Activated T-helper 1 cell treated with anti-CD3 and anti-CD28 coated beads, Interleukin-12 subunit alpha, Interleukin-12 subunit beta, Interleukin-2, Interleukin-4 antibody, amounts not matched to agents 30 ng/mL and 10 ng/mL and 1 ng/mL, durations not matched to agents 14 hours and 24 hours and 36 hours (primary cell): ENCODE measurements at regions of chr3 and their contacts with region 1.

Region 1: GRCh38 chr3:60017631-60018030 is 967.8 kb upstream of the CFAP20DC start:
- DNase-seq: peak; percentile 66
- H3K4me3 Mint-ChIP-seq: peak overlapping the region; percentile 74
- H3K27ac Mint-ChIP-seq: peak overlapping the region; percentile 96
- H3K4me1 Mint-ChIP-seq: peaks cover 67% of the 10 kb centered on the region
- H3K27me3 Mint-ChIP-seq: peaks cover 2% of the 10 kb centered on the region

Region 2: GRCh38 chr3:59235634-59236012 is 782.0 kb before region 1 on chr3:
- intact Hi-C with region 1: loop called (anchors 2 kb)
- DNase-seq: peak; percentile 37
- H3K4me3 Mint-ChIP-seq: peak overlapping the region; percentile 58
- H3K27ac Mint-ChIP-seq: peak overlapping the region; percentile 27
- H3K4me1 Mint-ChIP-seq: peaks cover 29% of the 10 kb centered on the region
- H3K27me3 Mint-ChIP-seq: peaks cover 6% of the 10 kb centered on the region

Region 3: GRCh38 chr3:59866076-59866475 is 151.6 kb before region 1 on chr3:
- intact Hi-C with region 1: loop called (anchors 1 kb)
- DNase-seq: no peak
- H3K4me3 Mint-ChIP-seq: no peak overlapping the region
- H3K27ac Mint-ChIP-seq: no peak overlapping the region
- H3K4me1 Mint-ChIP-seq: peaks cover 40% of the 10 kb centered on the region
- H3K27me3 Mint-ChIP-seq: no peaks in the 10 kb centered on the region

Region 4: DNA sequence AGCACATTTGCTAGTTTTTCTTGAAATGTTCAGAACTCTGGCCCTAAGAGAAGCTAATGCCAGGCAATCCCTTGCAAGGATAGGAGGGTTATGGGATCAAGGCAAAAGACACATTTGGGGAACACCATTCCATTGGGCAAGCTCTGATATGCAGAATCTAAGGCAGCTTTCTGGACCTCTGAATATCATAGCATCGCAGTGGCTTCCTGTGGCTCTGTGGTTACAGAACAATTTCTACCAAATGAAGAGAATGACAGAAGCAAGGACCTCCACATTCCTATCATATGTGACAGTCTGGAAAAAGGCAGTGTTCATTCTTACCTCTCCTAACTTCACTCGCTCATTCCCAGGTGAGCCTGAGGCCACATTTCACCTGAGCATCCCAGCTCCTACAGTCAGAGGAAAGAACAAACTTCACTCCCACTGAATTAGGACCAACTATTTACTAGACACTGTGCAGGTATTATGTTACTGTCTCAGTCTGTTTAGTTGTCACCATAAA is 131.7 kb before region 1 on chr3:
- intact Hi-C with region 1: no loop called
- DNase-seq: no peak
- H3K4me3 Mint-ChIP-seq: no peak overlapping the region
- H3K27ac Mint-ChIP-seq: no peak overlapping the region
- H3K4me1 Mint-ChIP-seq: peaks cover 24% of the 10 kb centered on the region
- H3K27me3 Mint-ChIP-seq: no peaks in the 10 kb centered on the region

Region 5: GRCh38 chr3:59994732-59995304 is 22.8 kb before region 1 on chr3:
- intact Hi-C with region 1: loop called (anchors 1 kb)
- DNase-seq: no peak
- H3K4me3 Mint-ChIP-seq: no peak overlapping the region
- H3K27ac Mint-ChIP-seq: no peak overlapping the region
- H3K4me1 Mint-ChIP-seq: peaks cover 54% of the 10 kb centered on the region
- H3K27me3 Mint-ChIP-seq: no peaks in the 10 kb centered on the region

Region 6: DNA sequence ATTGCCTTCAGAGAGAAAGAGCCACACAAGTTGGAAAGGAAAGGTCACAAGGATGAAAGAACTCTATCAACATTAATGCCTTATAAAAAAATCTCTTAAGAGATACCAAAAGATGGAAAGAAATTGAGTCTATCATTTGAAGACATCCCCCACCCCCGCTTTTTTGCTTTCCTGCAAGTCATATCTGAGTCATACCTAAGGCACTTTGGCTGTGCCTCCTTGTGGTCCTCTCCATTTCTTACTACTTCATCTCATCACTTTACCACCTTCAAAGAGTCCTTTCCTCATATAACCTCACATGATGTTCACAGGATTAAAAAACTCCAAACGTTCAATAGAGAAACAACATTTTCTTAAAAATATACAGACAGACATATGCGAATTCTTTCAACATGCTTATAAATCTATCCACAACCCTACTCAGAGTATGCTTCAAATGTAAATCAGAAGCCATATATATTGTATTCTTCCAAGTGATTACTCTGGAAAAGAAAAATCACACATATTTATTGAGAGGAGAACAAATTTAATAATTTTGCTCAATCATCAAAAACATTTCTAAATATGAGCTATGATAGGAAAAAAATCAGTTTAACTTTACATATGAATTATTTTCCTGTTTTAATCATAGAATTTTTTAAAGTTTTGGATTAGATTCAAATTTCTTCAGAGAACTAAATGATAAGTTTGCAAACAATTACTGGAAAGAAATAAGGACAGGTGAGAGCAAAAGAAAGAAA is 36.1 kb after region 1 on chr3:
- intact Hi-C with region 1: loop called (anchors 1 kb)
- DNase-seq: no peak
- H3K4me3 Mint-ChIP-seq: peak overlapping the region; percentile 21
- H3K27ac Mint-ChIP-seq: peak overlapping the region; percentile 75
- H3K4me1 Mint-ChIP-seq: peaks cover 86% of the 10 kb centered on the region
- H3K27me3 Mint-ChIP-seq: no peaks in the 10 kb centered on the region

Region 7: GRCh38 chr3:60192297-60193114 is 174.9 kb after region 1 on chr3:
- intact Hi-C with region 1: loop called (anchors 1 kb)
- DNase-seq: no peak
- H3K4me3 Mint-ChIP-seq: peak overlapping the region; percentile 62
- H3K27ac Mint-ChIP-seq: peak overlapping the region; percentile 94
- H3K4me1 Mint-ChIP-seq: peaks cover 58% of the 10 kb centered on the region
- H3K27me3 Mint-ChIP-seq: no peaks in the 10 kb centered on the region